ENCODE measurements at regions of chr1 and their contacts with region 1.

Region 1: DNA sequence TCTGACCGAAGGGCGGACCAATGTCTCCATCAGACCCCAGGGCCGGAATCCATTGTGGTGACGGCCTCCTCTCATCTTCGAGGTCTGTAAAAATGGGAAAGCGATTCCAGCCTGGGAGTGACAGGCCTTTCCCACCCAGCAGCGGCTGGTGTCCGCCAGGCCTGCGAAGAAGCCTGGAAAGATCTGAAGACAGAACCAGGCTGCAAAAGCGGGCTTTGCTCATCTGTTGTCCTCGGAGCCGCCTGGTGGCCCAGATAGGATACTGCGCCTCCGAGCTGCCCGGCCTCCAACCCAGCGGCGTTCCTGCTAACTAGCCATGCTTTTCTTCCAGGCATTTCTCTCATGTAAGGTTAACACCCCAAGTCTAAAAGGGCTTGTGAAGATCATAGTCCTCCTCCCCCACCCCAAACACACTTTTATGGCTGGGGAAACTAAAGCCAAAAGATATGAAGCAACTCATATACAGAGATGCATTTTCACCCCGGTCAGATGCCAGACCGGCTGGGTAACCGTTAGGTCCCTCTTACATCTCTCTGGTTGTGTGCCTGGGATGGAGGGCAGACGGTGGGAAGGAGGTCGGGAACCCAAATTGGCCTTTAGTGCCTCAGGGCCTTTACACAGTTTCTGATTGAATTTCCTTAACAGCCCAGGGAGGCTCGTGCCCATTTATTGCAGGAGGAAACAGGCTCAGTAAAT is 1.9 kb upstream of the DHRS3 start:
- DNase-seq: peak; percentile 69
- H3K4me3 Mint-ChIP-seq: peak overlapping the region; percentile 97
- H3K27ac Mint-ChIP-seq: peak overlapping the region; percentile 69
- H3K4me1 Mint-ChIP-seq: peaks cover 45% of the 10 kb centered on the region
- H3K27me3 Mint-ChIP-seq: no peaks in the 10 kb centered on the region

Region 2: DNA sequence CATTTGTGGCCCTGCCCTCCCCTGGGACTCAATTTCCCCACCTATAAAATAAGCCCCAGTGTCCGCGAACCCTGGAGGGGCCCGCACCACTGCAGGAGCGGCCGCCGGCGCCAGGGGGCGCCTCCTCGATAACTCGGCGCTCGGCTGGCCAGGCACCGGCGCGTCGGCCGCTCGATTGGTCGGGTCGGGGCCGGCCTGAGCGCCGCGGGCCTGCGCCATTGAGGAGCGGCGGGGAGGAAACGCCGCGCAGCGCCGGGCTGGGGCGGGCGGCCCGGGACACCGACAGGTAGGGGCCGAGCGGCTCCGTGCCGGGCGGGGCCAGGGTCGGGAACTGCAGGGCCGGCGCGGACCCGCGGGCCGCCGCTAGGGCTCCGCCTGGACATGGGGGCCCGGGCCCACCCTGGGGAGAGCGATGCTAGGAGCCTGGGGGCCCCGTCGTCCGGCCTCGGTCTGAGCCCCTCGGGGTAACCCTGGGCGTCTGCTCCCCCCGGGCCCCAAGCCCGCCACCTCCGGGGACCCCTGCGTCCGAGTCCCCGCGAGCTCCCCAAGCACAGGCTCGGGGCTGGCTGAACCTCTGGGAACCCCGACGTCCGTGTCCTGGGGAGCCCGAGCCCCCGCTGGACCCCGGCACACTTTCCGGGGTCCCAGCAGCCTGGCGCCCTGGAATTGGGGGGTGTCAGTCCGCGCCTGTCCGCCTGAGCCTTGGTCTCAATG is 389.9 kb before region 1 on chr1 and contains the start of gene VPS13D:
- intact Hi-C with region 1: loop called (anchors 2 kb)
- DNase-seq: peak; percentile 81
- H3K4me3 Mint-ChIP-seq: peak within 1 kb of the TSS; percentile 89
- H3K27ac Mint-ChIP-seq: peak within 1 kb of the TSS; percentile 52
- H3K4me1 Mint-ChIP-seq: peaks cover 14% of the 10 kb centered on the region
- H3K27me3 Mint-ChIP-seq: peaks cover 8% of the 10 kb centered on the region
- total RNA-seq, gene VPS13D: 33.6 and 35.7 TPM in 2 replicates

Region 3: DNA sequence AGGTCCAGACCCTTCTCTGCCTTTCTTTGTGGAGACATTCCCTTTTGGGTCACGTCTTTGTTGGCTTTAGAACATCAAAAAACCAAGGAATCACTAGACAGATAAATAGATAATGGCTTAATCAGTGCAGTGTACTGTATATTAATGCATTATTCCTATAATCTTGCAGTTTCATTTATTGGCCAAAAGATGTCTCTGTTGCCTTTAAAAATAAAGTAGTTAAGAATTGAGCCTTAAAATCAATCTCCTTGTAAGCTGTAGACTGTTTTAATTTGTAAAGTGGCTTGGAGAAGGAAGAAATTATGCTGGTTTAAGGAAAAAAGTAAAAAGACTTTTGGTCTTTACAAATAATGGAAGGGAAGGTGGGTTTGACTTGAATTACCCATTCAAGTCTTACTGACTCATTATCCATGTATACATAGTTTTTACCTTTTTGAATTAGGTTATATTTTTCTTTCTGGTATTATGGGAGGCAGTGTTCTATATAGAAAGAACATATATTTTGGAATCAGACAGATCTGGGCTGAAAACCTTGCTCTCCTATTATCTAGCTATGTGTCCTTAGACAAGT is 305.5 kb before region 1 on chr1:
- intact Hi-C with region 1: loop called (anchors 1 kb)
- DNase-seq: no peak
- H3K4me3 Mint-ChIP-seq: no peak overlapping the region
- H3K27ac Mint-ChIP-seq: no peak overlapping the region
- H3K4me1 Mint-ChIP-seq: peaks cover 8% of the 10 kb centered on the region
- H3K27me3 Mint-ChIP-seq: no peaks in the 10 kb centered on the region

Region 4: GRCh38 chr1:12386130-12386529 is 233.8 kb before region 1 on chr1:
- intact Hi-C with region 1: loop called (anchors 1 kb)
- DNase-seq: no peak
- H3K4me3 Mint-ChIP-seq: peak overlapping the region; percentile 38
- H3K27ac Mint-ChIP-seq: peak overlapping the region; percentile 70
- H3K4me1 Mint-ChIP-seq: peaks cover 58% of the 10 kb centered on the region
- H3K27me3 Mint-ChIP-seq: no peaks in the 10 kb centered on the region

Region 5: DNA sequence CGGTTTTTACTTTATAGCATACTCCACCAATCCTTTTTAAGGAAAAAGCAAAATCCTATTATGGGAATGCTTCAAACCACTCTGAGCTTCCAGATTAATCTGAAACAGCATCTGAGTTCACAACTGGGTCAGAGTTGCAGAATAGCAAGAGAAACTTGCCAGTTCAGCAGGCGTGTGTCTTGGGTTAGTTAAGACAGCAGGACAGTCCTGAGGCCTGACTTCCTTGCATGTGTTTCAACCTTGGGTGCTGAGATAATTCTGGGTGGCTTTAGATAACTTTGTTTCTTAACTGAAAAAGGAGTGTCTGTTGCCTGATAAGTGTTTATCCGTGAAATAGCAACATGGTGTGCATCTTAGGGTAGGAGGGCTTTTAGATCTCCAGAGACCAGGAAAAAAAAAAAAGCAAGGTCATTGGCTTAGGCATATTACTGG is 171.2 kb before region 1 on chr1:
- intact Hi-C with region 1: loop called (anchors 1 kb)
- DNase-seq: no peak
- H3K4me3 Mint-ChIP-seq: peak overlapping the region; percentile 53
- H3K27ac Mint-ChIP-seq: peak overlapping the region; percentile 84
- H3K4me1 Mint-ChIP-seq: peaks cover 83% of the 10 kb centered on the region
- H3K27me3 Mint-ChIP-seq: peaks cover 10% of the 10 kb centered on the region

Region 6: GRCh38 chr1:12518931-12519692 is 100.8 kb before region 1 on chr1:
- intact Hi-C with region 1: loop called (anchors 1 kb)
- DNase-seq: peak; percentile 21
- H3K4me3 Mint-ChIP-seq: no peak overlapping the region
- H3K27ac Mint-ChIP-seq: peak overlapping the region; percentile 73
- H3K4me1 Mint-ChIP-seq: peaks cover 38% of the 10 kb centered on the region
- H3K27me3 Mint-ChIP-seq: no peaks in the 10 kb centered on the region

Measured in activated T-helper 1 cell treated with anti-CD3 and anti-CD28 coated beads, Interleukin-12 subunit alpha, Interleukin-12 subunit beta, Interleukin-2, Interleukin-4 antibody, amounts not matched to agents 30 ng/mL and 10 ng/mL and 1 ng/mL, durations not matched to agents 14 hours and 24 hours and 36 hours (primary cell).